ENCODE measurements at regions of chr19 and their contacts with region 1.

Region 1: GRCh38 chr19:13718733-13719132 is 45.6 kb upstream of the MRI1 start:
- DNase-seq: no peak
- ATAC-seq: no peak
- H3K4me3 ChIP-seq: no peak overlapping the region
- H3K27ac ChIP-seq: no peak overlapping the region
- H3K4me1 ChIP-seq: no peaks in the 10 kb centered on the region
- H3K27me3 ChIP-seq: no peaks in the 10 kb centered on the region
- CTCF ChIP-seq: peak in 1 of 4 donors; percentile 19
- POLR2A ChIP-seq: no peak

Region 2: DNA sequence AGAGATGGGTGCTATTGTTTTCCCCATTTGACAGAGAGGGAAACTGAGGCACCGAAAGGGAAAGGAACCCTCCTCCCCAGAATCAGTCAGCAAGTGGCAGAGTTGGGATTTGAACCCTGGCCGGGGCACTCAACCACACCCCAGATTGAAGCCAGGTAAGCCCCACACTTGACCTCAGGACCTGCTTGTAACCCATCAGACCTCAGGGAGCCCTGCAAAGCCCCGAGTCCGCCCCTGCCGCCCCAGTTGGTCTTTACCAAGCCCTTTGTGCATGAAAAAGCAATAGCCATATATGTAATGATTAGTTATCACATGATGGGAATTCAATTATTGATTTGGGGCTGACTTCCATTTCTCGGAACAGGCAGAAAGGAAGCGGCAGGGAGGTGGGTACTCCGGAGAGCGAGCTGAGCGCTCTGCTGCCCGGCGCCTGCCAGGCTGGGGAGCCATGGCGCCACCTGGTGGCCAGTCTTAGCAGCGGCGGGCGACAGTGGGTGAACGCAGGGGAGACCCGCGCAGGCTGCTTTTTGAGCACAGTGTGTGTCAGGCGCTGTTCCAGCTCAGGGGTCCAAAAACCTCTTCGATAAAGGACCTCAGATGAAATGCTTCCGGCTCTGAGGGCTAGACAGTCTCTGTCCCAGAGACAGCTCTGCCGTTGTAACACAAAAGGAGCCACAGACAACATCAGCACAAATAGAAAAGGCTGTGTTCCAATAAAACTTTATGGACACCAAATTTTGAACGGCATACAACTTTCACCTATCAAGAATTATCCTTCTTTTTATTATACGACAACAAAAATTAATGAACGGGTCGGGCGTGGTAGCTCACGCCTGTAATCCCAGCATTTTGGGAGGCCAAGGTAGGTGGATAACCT is 129.5 kb before region 1 on chr19:
- intact Hi-C with region 1: loop called in 1 of 2 experiments (anchors 10 kb)
- DNase-seq: peak; percentile 59 to 74 (median 69)
- ATAC-seq: peak; percentile 85 to 89 (median 86)
- H3K4me3 ChIP-seq: no peak overlapping the region
- H3K27ac ChIP-seq: no peak overlapping the region
- H3K4me1 ChIP-seq: no peaks in the 10 kb centered on the region
- H3K27me3 ChIP-seq: no peaks in the 10 kb centered on the region
- CTCF ChIP-seq: peak; percentile 78 to 99 (median 96)
- POLR2A ChIP-seq: no peak

Region 3: DNA sequence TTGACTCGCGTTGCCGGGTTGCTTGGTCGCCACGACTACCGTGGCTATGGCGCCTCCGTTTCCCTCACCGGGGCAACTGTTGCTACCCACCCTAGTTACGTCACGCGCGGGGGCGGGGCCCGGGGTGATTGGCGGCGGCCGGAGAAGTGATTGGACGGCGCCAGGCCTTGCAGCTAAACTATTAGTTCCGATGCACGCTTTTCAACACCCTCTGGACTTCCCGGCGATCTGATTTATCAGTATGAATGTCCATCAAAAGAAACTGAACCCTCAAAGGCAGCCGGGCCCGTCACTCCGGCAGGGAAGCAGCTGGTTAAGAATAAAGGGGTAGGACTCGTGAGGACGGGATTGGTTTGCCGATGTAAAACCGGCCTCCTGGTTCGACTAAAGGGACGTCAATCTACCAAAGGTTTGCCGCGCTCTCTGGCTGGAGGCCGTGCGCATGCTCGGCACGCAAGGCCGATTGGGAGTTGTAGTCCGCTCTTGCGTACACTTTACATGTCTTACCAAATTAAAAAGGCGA is 287.6 kb after region 1 on chr19 and contains the start of gene RFX1:
- intact Hi-C with region 1: no loop called
- DNase-seq: peak; percentile 99 to 100 (median 100)
- ATAC-seq: peak; percentile 77 to 88 (median 80)
- H3K4me3 ChIP-seq: peak within 1 kb of the TSS; percentile 76 to 92 (median 88)
- H3K27ac ChIP-seq: peak within 1 kb of the TSS; percentile 97 to 100 (median 99)
- H3K4me1 ChIP-seq: peaks cover 0 to 16% (median 0%) of the 10 kb centered on the region in 4 donors
- H3K27me3 ChIP-seq: no peaks in the 10 kb centered on the region
- CTCF ChIP-seq: no peak
- POLR2A ChIP-seq: no peak
- total RNA-seq, gene RFX1: 2.5 to 9.3 (median 5.7) TPM

Measured in right lobe of liver (tissue), 6 donors.